ENCODE measurements at regions of chr22 and their contacts with region 1.

Region 1: DNA sequence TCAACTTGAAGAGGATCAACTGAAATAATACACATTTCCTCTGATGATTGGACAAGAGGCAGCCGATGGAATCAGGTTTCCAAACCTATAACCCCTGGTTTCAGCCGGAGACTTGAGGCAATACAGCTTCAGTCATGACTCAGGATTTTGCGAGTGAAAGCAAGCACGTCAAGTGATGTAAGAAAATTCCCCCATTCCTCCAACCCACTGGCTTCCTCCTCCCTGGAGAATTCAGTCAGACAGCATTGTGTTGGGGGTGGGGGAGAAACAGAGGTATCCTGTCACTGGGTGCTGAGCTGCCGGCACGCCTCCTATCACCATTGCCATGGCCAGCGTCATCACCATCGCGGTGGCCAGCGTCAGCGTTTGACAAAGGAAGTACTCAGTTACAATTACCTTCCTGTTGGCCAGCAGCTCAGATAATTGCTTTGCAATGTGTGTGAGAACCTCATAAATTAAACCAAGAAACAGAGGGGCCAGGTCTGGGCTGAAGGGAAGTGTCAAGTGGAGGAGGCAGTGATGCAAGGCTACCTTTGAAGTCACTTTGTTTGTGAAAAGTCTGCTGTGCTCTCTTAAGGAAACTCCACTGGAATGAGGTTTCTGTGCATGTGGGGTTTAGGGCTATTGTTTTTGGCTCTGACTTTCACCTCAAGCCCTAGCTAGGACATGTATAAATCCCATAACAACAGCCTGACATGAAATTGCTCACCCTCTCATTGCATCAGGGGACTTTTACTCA is 50.2 kb downstream of the LIF start:
- DNase-seq: peak; percentile 83 to 100
- ATAC-seq: peak; percentile 87 to 91
- H3K4me3 ChIP-seq: no peak overlapping the region
- H3K27ac ChIP-seq: peak overlapping the region; percentile 95 to 100
- H3K4me1 ChIP-seq: peaks cover 70% of the 10 kb centered on the region
- CTCF ChIP-seq: no peak
- EP300 ChIP-seq: peak; percentile 96 to 99; a peak in 4 of 5 replicates
- POLR2A ChIP-seq: no peak
- RAD21 ChIP-seq: peak in 1 of 2 experiments; percentile 36; a peak in 3 of 5 replicates

Region 2: GRCh38 chr22:30212363-30212995 is 16.2 kb after region 1 on chr22:
- CTCF ChIA-PET with region 1: no interaction called
- POLR2A ChIA-PET with region 1: interaction called, 47 read pairs
- DNase-seq: peak; percentile 81 to 98
- ATAC-seq: peak; percentile 80 to 87
- H3K4me3 ChIP-seq: no peak overlapping the region
- H3K27ac ChIP-seq: peak overlapping the region; percentile 95 to 100
- H3K4me1 ChIP-seq: peaks cover 81% of the 10 kb centered on the region
- CTCF ChIP-seq: 0 out of 3 replicates have a peak, but pooled peaks have one; percentile 12
- EP300 ChIP-seq: peak; percentile 99
- POLR2A ChIP-seq: no peak
- RAD21 ChIP-seq: peak; percentile 67 to 68

Measured in A549 (cell line).